PC-3 (cell line): ENCODE measurements at regions of chr2 and their contacts with region 1.

Region 1: DNA sequence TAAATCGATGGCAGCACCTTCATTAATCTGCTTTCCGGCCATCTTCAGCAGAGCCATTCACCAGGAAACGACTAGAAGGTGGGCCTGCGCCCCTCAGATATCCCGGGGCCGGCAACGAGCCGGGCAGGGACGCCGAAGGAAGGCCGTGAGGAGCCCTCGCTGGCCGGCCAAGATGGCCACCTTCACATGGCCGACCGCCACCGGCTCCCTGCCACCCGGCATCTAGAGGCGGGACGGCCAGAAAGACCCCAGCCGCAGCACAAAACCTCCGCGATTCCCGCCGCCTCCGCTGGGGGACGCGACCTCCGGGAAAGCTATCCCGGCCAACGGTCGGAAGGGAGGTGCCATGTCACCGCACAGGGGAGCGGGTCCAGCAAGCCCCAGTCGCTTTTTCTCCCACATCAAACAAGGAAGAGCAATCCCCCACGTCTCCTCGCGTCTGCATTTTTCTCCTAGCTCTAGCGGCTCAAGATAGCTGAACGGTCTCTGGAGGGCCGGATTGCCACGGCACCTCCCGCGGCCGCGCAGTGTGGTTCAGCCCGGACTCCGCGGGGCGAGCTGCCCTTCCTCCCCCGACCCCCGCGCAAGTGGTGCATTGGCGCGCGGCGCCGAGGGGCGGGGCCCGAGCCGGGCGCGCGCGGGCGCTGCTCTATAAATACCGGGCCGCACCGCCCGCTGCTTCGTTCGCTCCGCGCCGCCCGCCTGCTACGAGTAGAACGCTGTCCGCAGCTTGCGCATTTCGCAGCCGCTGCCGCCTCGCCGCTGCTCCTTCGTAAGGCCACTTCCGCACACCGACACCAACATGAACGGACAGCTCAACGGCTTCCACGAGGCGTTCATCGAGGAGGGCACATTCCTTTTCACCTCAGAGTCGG is at the start of gene MAT2A:
- DNase-seq: peak; percentile 93
- ATAC-seq: peak; percentile 57
- H3K4me3 ChIP-seq: peak within 1 kb of the TSS; percentile 95
- H3K27ac ChIP-seq: peak within 1 kb of the TSS; percentile 97
- H3K4me1 ChIP-seq: peaks cover 48% of the 10 kb centered on the region
- H3K27me3 ChIP-seq: no peaks in the 10 kb centered on the region
- CTCF ChIP-seq: peak; percentile 67
- total RNA-seq, gene MAT2A: 304 and 309 TPM in 2 replicates

Region 2: DNA sequence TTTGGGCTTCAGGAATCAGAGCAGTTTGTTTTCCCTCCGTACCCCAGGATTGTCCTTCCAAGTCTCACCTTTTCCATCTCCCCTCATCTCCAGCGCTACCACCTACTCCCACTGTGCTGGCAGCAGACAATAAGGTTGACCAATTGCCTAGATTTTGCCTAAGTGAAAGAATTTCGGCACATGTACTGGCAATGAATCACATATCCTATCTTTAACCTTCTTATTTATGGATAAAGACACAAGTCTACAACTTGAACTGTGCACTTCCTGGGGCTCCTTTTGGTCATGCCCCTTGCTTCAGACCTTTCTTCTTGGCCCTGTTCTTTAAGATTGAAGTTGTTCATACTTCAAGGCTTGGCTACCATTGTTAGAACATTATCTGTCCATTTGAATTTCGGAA is 496.4 kb before region 1 on chr2:
- CTCF ChIA-PET with region 1: no interaction called
- POLR2A ChIA-PET with region 1: interaction called, 10 read pairs
- intact Hi-C with region 1: no loop called
- DNase-seq: no peak
- ATAC-seq: no peak
- H3K4me3 ChIP-seq: no peak overlapping the region
- H3K27ac ChIP-seq: no peak overlapping the region
- H3K4me1 ChIP-seq: no peaks in the 10 kb centered on the region
- H3K27me3 ChIP-seq: no peaks in the 10 kb centered on the region
- CTCF ChIP-seq: no peak

Region 3: GRCh38 chr2:85496436-85496835 is 42.3 kb before region 1 on chr2:
- CTCF ChIA-PET with region 1: no interaction called
- POLR2A ChIA-PET with region 1: interaction called, 5 read pairs
- intact Hi-C with region 1: loop called (anchors 2 kb)
- DNase-seq: no peak
- ATAC-seq: no peak
- H3K4me3 ChIP-seq: no peak overlapping the region
- H3K27ac ChIP-seq: no peak overlapping the region
- H3K4me1 ChIP-seq: peaks cover 21% of the 10 kb centered on the region
- H3K27me3 ChIP-seq: no peaks in the 10 kb centered on the region
- CTCF ChIP-seq: no peak

Region 4: GRCh38 chr2:85504778-85505323 is 33.9 kb before region 1 on chr2:
- CTCF ChIA-PET with region 1: no interaction called
- POLR2A ChIA-PET with region 1: interaction called, 27 read pairs
- intact Hi-C with region 1: loop called (anchors 1 kb)
- DNase-seq: peak; percentile 99
- ATAC-seq: peak; percentile 82
- H3K4me3 ChIP-seq: no peak overlapping the region
- H3K27ac ChIP-seq: peak overlapping the region; percentile 89
- H3K4me1 ChIP-seq: peaks cover 47% of the 10 kb centered on the region
- H3K27me3 ChIP-seq: no peaks in the 10 kb centered on the region
- CTCF ChIP-seq: no peak

Region 5: DNA sequence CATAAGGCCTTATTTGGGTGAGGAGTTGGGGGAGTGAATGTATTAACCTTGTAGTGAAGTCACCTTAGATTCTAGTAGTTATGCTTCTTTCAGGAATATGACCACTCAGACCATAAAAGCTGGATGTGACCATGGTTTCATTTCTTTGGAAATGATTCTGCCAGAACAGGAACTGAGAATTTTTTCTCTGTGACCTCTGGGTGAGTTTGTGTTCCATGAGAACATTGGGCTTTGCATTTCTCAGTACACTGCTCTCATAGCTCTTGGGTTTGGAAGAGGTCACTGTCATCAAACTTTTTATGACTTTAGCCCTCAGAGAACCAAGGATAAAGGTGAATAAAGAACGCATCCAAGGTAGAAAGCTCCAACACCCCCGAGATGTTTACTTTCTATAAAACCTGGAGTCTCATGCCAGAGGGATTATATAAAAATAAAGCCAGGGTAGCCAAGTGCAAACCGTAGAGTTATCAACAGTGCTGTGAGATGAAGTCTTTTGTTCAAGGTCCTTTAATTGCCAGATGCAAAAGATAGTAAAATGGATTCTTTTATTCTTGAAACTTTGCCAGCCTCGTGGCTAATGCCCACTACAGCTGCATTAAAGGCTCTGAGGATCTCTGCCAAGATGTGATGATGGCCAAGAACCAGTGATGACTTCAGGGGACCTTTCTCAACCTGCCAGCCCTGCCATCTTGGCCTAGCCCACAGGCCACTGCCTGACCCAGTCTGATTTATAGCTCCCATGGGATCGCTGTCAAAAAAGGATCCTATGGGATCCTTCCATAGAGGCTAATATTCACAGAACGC is 27.5 kb before region 1 on chr2:
- CTCF ChIA-PET with region 1: no interaction called
- POLR2A ChIA-PET with region 1: interaction called, 6 read pairs
- intact Hi-C with region 1: loop called (anchors 1 kb)
- DNase-seq: peak; percentile 77
- ATAC-seq: peak; percentile 87
- H3K4me3 ChIP-seq: no peak overlapping the region
- H3K27ac ChIP-seq: peak overlapping the region; percentile 82
- H3K4me1 ChIP-seq: peaks cover 53% of the 10 kb centered on the region
- H3K27me3 ChIP-seq: no peaks in the 10 kb centered on the region
- CTCF ChIP-seq: no peak

Region 6: GRCh38 chr2:85516653-85517406 is 21.9 kb before region 1 on chr2:
- CTCF ChIA-PET with region 1: no interaction called
- POLR2A ChIA-PET with region 1: interaction called, 19 read pairs
- intact Hi-C with region 1: loop called (anchors 2 kb)
- DNase-seq: peak; percentile 79
- ATAC-seq: peak; percentile 88
- H3K4me3 ChIP-seq: no peak overlapping the region
- H3K27ac ChIP-seq: peak overlapping the region; percentile 88
- H3K4me1 ChIP-seq: peaks cover 51% of the 10 kb centered on the region
- H3K27me3 ChIP-seq: no peaks in the 10 kb centered on the region
- CTCF ChIP-seq: no peak